CD4-positive, alpha-beta T cell (primary cell): ENCODE measurements at regions of chrX and their contacts with region 1.

Region 1: GRCh38 chrX:124771292-124771691 is 424.9 kb downstream of the SH2D1A start:
- DNase-seq: no peak
- ATAC-seq: no peak
- H3K4me3 ChIP-seq: no peak overlapping the region
- H3K4me3 Mint-ChIP-seq: no peak overlapping the region
- H3K27ac ChIP-seq: no peak overlapping the region
- H3K27ac Mint-ChIP-seq: no peak overlapping the region
- H3K4me1 ChIP-seq: no peaks in the 10 kb centered on the region
- H3K4me1 Mint-ChIP-seq: no peaks in the 10 kb centered on the region
- H3K27me3 ChIP-seq: no peaks in the 10 kb centered on the region
- H3K27me3 Mint-ChIP-seq: no peaks in the 10 kb centered on the region
- CTCF ChIP-seq: no peak

Region 2: DNA sequence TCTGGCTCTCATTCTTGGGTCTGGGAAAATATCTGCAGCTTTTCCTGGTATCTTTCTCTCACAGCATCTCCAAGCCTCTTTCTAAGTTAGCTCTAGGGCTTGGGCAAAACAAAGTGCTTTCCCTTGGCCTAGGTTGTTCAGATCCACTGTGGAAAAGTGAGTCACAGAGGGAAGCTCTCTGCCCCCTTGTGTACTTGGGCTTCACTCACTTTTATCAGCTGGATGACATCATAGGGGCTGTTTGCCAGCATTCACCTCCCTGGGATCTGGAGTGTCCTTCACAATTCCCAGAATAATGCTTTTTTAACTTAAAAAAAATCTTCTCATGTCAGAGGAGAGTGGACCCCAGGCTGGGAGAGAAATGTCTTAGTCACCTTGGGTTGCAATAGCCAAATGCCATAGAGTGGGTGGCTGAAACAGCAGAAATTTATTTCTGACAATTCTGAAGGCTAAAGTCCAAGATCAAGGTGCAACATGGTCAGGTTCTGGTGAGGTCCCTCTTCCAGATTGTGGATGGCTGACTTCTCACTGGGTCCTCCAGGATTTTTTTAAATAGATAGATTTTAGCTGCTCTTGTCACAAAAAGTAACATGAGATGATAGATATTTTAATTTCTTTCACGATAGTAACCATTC is 177.2 kb before region 1 on chrX:
- CTCF ChIA-PET with region 1: no interaction called
- POLR2A ChIA-PET with region 1: no interaction called
- intact Hi-C with region 1: loop called in 1 of 2 experiments (anchors 10 kb)
- DNase-seq: no peak
- ATAC-seq: no peak
- H3K4me3 ChIP-seq: no peak overlapping the region
- H3K4me3 Mint-ChIP-seq: no peak overlapping the region
- H3K27ac ChIP-seq: no peak overlapping the region
- H3K27ac Mint-ChIP-seq: no peak overlapping the region
- H3K4me1 ChIP-seq: peaks cover 7% of the 10 kb centered on the region
- H3K4me1 Mint-ChIP-seq: peaks cover 7% of the 10 kb centered on the region
- H3K27me3 ChIP-seq: no peaks in the 10 kb centered on the region
- H3K27me3 Mint-ChIP-seq: no peaks in the 10 kb centered on the region
- CTCF ChIP-seq: no peak